Calu3 (cell line): ENCODE measurements at regions of chr9 and their contacts with region 1.

Region 1: GRCh38 chr9:68507130-68507805 is 33.4 kb downstream of the TMEM252 start:
- DNase-seq: no peak
- H3K4me3 Mint-ChIP-seq: no peak overlapping the region
- H3K27ac Mint-ChIP-seq: no peak overlapping the region
- H3K4me1 Mint-ChIP-seq: no peaks in the 10 kb centered on the region
- H3K27me3 Mint-ChIP-seq: peaks cover 14% of the 10 kb centered on the region
- CTCF ChIP-seq: no peak

Region 2: GRCh38 chr9:68560071-68560844 is 53.0 kb after region 1 on chr9:
- CTCF ChIA-PET with region 1: no interaction called
- intact Hi-C with region 1: loop called (anchors 10 kb)
- DNase-seq: peak; percentile 51
- H3K4me3 Mint-ChIP-seq: no peak overlapping the region
- H3K27ac Mint-ChIP-seq: no peak overlapping the region
- H3K4me1 Mint-ChIP-seq: no peaks in the 10 kb centered on the region
- H3K27me3 Mint-ChIP-seq: peaks cover 16% of the 10 kb centered on the region
- CTCF ChIP-seq: peak; percentile 32